Left lung (tissue), 14 donors: ENCODE measurements at regions of chr11 and their contacts with region 1.

Region 1: DNA sequence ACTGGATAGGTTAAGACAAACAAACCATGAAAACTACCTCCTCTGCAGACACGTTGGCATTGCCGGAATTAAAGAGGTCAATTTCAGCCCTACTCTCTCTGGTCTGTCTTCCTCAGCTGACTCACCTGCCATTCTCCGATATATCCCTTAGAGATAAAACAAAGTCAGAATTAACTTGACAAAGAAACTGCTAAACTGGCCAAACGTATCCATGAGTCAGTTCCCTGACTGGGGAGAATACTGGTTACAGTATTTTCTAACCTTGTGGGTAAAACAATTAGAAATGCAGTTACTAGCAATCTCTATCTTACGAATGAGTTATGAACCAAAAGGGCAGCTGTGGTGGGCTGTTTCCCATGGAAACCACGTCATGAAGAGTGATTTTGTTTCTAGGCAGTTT is 96.2 kb downstream of the RDX start:
- DNase-seq: no peak
- ATAC-seq: no peak
- H3K4me3 ChIP-seq: no peak overlapping the region
- H3K27ac ChIP-seq: no peak overlapping the region
- H3K4me1 ChIP-seq: peaks cover 0 to 4% of the 10 kb centered on the region in 2 donors
- H3K27me3 ChIP-seq: no peaks in the 10 kb centered on the region
- CTCF ChIP-seq: no peak

Region 2: DNA sequence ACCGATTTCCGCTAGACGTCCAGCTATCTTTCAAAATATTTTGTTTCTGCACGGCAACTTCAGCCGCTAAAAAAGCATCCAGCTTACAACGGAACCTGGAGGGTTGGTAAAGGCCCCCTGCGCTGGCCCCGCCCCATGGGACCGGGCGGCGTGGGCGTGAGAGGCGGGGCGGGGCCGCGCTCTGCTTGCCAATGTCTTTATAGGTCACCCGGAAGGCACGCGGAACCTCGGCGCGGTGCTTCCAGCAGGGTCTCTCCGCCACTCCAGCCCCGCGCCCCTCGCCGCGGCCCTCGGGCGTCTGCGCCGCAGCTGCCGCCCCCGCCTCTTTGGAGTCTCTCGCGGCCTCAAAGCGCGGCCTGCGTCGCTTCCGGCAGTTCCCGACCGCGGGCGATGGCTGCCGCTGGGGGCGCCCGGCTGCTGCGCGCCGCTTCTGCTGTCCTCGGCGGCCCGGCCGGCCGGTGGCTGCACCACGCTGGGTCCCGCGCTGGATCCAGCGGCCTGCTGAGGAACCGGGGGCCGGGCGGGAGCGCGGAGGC is 229.6 kb after region 1 on chr11 and contains the start of gene FDX1:
- intact Hi-C with region 1: loop called in 1 of 2 experiments (anchors 5 kb)
- DNase-seq: peak; percentile 82 to 95 (median 90)
- ATAC-seq: peak; percentile 90
- H3K4me3 ChIP-seq: peak within 1 kb of the TSS; percentile 80
- H3K27ac ChIP-seq: peak within 1 kb of the TSS; percentile 87 to 90
- H3K4me1 ChIP-seq: peaks cover 14 to 29% of the 10 kb centered on the region in 2 donors
- H3K27me3 ChIP-seq: no peaks in the 10 kb centered on the region
- CTCF ChIP-seq: peak; percentile 53 to 60
- polyA plus RNA-seq, gene FDX1: 16.0 to 18.5 (median 16.6) TPM